ENCODE measurements at regions of chr6 and their contacts with region 1.

Region 1: GRCh38 chr6:47787620-47788497 is 6.0 kb downstream of the OPN5 start:
- DNase-seq: peak; percentile 50
- H3K4me3 ChIP-seq: peak overlapping the region in 1 of 2 experiments; percentile 36; a peak in 2 of 4 replicates
- H3K27ac ChIP-seq: no peak overlapping the region
- H3K4me1 ChIP-seq: no peaks in the 10 kb centered on the region; a peak in 1 of 4 replicates
- H3K27me3 ChIP-seq: peaks cover 38% of the 10 kb centered on the region; the same call in 1 of the 2 replicates
- CTCF ChIP-seq: peak; percentile 96
- EP300 ChIP-seq: no peak
- RAD21 ChIP-seq: peak; percentile 90

Region 2: GRCh38 chr6:47631269-47631772 is 156.5 kb before region 1 on chr6:
- CTCF ChIA-PET with region 1: interaction called, 62 read pairs
- POLR2A ChIA-PET with region 1: no interaction called
- DNase-seq: peak; percentile 19
- H3K4me3 ChIP-seq: no peak overlapping the region
- H3K27ac ChIP-seq: no peak overlapping the region
- H3K4me1 ChIP-seq: peaks cover 0 to 11% of the 10 kb centered on the region in 2 experiments; a peak in 2 of 4 replicates
- H3K27me3 ChIP-seq: no peaks in the 10 kb centered on the region
- CTCF ChIP-seq: peak; percentile 73
- EP300 ChIP-seq: no peak
- RAD21 ChIP-seq: peak; percentile 71

Region 3: DNA sequence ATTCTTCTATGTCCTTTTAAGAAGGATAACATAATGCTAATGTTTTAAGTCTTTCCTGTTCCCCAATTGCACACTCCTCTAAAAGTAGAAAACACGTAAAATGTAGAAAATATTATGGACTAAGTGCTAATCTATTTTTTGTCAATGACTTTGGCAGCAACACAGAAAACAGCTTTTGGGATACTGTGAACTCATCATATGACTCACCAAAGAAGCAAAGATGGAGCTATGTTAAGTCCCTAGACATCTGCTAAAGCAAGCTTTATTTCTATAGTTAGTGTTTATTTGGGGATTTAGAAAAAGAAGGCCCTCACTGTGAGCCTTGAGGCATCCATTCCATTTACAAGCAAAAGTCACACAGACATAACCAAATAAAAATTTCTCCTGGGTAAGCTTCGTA is 17.0 kb after region 1 on chr6:
- CTCF ChIA-PET with region 1: interaction called, 16 read pairs
- POLR2A ChIA-PET with region 1: no interaction called
- DNase-seq: no peak
- H3K4me3 ChIP-seq: no peak overlapping the region
- H3K27ac ChIP-seq: no peak overlapping the region
- H3K4me1 ChIP-seq: no peaks in the 10 kb centered on the region
- H3K27me3 ChIP-seq: peaks cover 37% of the 10 kb centered on the region; the same call in 1 of the 2 replicates
- CTCF ChIP-seq: no peak
- EP300 ChIP-seq: no peak
- RAD21 ChIP-seq: no peak

Region 4: DNA sequence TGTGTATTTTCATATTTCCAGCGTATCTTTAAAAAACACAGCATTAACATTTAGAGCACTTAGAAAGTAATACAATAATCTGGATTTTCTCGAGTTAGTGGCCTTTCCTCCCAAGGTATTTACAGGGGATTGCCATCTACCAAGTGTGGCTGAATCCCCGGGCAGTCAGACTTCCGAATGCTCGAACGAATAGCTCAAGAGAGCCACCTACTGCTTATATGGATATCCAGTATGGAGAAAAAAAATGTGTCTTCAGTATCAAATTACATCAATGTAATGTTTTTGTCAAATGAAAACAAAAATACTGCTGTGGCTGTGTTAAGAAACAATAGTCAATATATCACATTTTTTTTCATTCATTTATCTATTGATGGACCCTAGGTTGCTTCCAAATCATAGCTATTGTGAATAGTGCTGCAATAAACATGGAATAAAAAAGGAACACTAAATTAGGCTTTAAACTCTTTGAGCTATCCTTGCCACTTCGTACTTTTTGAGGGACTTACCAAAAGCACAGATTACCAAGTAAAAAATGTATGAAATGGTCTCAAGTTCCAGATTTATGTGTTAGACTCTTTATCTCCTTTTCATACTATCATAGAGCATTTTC is 977.6 kb after region 1 on chr6:
- CTCF ChIA-PET with region 1: interaction called, 26 read pairs
- POLR2A ChIA-PET with region 1: no interaction called
- DNase-seq: peak; percentile 22
- H3K4me3 ChIP-seq: no peak overlapping the region; a peak in 1 of 4 replicates
- H3K27ac ChIP-seq: no peak overlapping the region
- H3K4me1 ChIP-seq: no peaks in the 10 kb centered on the region; a peak in 1 of 4 replicates
- H3K27me3 ChIP-seq: no peaks in the 10 kb centered on the region
- CTCF ChIP-seq: peak; percentile 80
- EP300 ChIP-seq: no peak
- RAD21 ChIP-seq: peak; percentile 75

Region 5: DNA sequence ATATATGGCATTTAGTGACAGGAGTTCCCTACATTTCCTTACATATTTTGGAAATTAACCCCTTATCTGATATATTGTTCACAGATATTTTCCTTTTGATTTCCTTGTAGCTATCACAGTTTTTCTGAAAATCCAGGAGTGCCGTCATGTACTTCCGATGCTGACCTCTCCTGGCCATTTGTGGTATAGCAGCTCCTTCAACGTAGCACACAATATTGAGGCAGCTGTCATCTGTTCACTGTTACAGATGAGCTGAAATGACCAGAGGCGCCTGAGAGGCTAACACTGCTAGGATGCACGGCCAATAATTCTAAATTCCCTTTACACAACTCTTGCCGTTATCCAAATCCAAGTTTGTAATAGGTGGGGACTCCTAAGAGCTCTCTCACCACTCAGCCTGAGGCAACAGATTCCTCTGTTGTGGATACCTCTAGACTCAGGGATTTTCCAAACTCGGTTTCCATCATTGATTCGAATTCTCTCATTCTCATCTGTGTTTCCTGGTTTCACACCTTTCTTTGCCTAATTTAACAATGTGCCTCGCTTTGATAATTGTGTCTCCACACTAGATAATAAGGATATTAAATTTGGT is 1622.2 kb after region 1 on chr6:
- CTCF ChIA-PET with region 1: interaction called, 10 read pairs
- POLR2A ChIA-PET with region 1: no interaction called
- DNase-seq: peak; percentile 40
- H3K4me3 ChIP-seq: no peak overlapping the region; a peak in 1 of 4 replicates
- H3K27ac ChIP-seq: no peak overlapping the region
- H3K4me1 ChIP-seq: no peaks in the 10 kb centered on the region; a peak in 1 of 4 replicates
- H3K27me3 ChIP-seq: no peaks in the 10 kb centered on the region
- CTCF ChIP-seq: peak; percentile 91
- EP300 ChIP-seq: no peak
- RAD21 ChIP-seq: peak; percentile 89

Region 6: GRCh38 chr6:49423817-49424216 is 1636.0 kb after region 1 on chr6:
- CTCF ChIA-PET with region 1: interaction called, 10 read pairs
- POLR2A ChIA-PET with region 1: no interaction called
- DNase-seq: peak; percentile 16
- H3K4me3 ChIP-seq: no peak overlapping the region
- H3K27ac ChIP-seq: no peak overlapping the region
- H3K4me1 ChIP-seq: no peaks in the 10 kb centered on the region
- H3K27me3 ChIP-seq: no peaks in the 10 kb centered on the region
- CTCF ChIP-seq: peak; percentile 48
- EP300 ChIP-seq: no peak
- RAD21 ChIP-seq: peak; percentile 72